Left cardiac atrium (tissue), 4 donors: ENCODE measurements at regions of chr5 and their contacts with region 1.

Region 1: DNA sequence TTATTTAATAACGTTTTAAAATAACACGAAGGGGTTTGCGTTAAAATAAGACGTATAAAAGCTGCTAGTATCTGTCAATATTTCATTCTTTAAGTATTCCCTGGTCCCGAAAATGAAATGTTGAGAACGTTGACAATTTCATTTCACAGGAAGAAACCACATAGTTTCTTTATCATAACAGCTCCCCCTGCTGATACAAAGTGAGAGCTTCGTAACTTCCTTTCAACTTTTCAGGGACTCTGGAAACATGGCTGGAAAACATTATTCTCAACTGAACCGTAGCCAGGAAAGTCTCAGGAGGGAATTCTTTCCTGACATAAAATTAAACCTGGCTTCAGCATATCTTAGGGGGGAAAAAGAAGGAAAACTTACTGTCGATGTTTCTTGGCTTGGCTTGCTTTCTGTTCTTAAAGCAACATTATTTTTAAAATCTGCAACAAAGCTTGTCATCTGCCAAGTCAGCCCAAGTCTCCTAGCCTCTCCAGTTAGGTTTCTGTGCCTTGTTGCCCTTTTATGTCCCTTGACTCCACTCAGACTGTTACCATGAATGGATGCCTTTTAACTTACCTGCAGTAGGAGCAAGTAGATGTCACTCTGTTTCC is 122.9 kb upstream of the DAB2 start:
- DNase-seq: no peak
- ATAC-seq: peak; percentile 72 to 92

Region 2: GRCh38 chr5:39217365-39218281 is 330.0 kb before region 1 on chr5:
- intact Hi-C with region 1: loop called in 1 of 2 experiments (anchors 5 kb)
- DNase-seq: peak; percentile 75
- ATAC-seq: peak; percentile 70 to 83

Region 3: GRCh38 chr5:39376293-39376714 is 171.3 kb before region 1 on chr5:
- intact Hi-C with region 1: loop called (anchors 2 to 5 kb)
- DNase-seq: no peak
- ATAC-seq: peak; percentile 44 to 51

Region 4: DNA sequence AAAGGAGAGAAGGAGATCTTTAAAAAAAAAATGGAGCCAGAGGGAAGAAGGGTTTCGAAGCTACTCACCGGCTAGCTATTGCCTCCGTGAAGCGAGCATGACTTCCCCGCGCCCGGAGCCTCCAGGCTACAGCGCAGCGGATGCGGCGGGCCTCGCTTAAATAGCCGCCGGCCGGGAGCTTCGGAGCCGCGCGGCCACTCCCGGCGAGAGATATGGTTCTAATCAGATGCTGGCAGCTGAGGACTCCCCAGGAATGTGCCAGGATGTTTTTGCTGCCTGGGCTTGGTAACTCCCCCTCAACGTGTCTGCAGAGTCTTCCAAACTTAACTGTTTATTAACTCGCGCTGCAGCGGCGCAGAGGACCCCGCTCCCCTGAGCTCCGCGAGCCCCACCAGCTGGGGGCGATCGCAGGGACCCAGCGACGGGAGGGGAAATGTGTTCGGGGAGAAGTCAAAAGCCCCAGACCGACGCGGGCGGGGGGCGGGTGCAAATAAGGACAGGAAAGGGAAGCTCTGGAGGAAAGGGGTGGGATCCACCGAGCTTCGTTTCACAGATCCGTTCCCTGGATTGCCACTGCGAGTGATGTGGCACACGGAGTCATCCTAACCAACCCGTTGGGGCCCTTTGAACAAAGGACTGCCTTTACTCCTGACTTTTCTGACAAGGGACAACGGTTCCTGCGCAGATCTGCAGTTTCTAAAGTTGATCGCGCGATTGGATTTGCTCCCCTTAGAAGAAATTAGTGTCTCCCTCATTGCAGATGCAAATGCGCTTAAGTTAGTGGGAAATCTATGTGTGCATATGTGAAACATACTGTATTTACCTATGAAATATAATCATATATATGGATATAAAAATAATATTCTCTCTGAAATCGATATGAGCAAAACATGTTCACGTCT is 122.7 kb before region 1 on chr5 and contains the start of gene DAB2:
- intact Hi-C with region 1: loop called in 1 of 2 experiments (anchors 5 kb)
- DNase-seq: peak; percentile 89
- ATAC-seq: peak; percentile 83 to 85
- total RNA-seq, gene DAB2: 58.2 to 67.3 TPM

Region 5: GRCh38 chr5:39608024-39608423 is 60.4 kb after region 1 on chr5:
- intact Hi-C with region 1: no loop called
- DNase-seq: no peak
- ATAC-seq: no peak

Region 6: DNA sequence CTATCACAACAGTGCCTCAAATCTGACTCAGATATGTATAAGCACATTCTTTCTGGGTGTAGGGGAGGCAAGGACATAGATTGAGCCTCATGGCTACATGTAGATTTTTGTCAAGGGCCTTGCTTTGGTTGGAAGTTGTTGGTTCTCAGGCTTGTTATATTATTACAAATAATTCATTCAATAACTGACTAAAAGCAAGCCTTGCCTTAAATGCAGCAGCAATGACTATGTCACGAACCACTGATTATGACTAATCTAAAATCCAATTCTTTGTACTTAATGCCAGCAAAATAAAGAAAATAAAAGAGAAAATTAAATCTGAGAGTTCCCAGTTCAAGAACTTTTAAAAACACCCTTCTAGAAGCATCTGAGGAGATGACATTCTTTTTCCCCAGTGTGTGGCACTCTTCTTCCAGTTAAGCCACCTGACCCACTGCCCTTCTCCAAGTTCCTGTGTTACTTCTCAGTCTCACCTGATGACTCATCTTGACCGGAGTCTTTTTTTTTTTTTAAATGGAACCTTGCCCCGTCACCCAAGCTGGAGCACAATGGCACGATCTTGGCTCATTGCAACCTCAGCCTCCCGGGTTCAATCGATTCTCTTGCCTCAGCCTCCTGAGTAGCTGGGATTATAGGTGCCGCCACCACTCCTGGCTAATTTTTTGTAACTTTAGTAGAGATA is 101.0 kb after region 1 on chr5:
- intact Hi-C with region 1: no loop called
- DNase-seq: no peak
- ATAC-seq: no peak